ENCODE measurements at regions of chr17 and their contacts with region 1.

Region 1: GRCh38 chr17:19744922-19745757 is 3.0 kb downstream of the ALDH3A1 start:
- DNase-seq: peak; percentile 99
- ATAC-seq: peak; percentile 92
- H3K4me3 Mint-ChIP-seq: peak overlapping the region; percentile 54
- H3K27ac Mint-ChIP-seq: no peak overlapping the region
- H3K4me1 Mint-ChIP-seq: peaks cover 22% of the 10 kb centered on the region
- H3K27me3 Mint-ChIP-seq: peaks cover 13% of the 10 kb centered on the region; the same call in 1 of the 2 replicates
- CTCF ChIP-seq: peak; percentile 97

Region 2: GRCh38 chr17:19460700-19461099 is 284.4 kb before region 1 on chr17:
- CTCF ChIA-PET with region 1: interaction called, 10 read pairs
- POLR2A ChIA-PET with region 1: interaction called, 3 read pairs
- DNase-seq: no peak
- ATAC-seq: peak; percentile 9
- H3K4me3 Mint-ChIP-seq: peak overlapping the region; percentile 21
- H3K27ac Mint-ChIP-seq: peak overlapping the region; percentile 83
- H3K4me1 Mint-ChIP-seq: peaks cover 90% of the 10 kb centered on the region
- H3K27me3 Mint-ChIP-seq: no peaks in the 10 kb centered on the region
- CTCF ChIP-seq: no peak

Region 3: GRCh38 chr17:19579867-19580565 is 165.1 kb before region 1 on chr17:
- CTCF ChIA-PET with region 1: interaction called, 11 read pairs
- POLR2A ChIA-PET with region 1: no interaction called
- DNase-seq: peak; percentile 30
- ATAC-seq: peak; percentile 60
- H3K4me3 Mint-ChIP-seq: peak overlapping the region; percentile 78
- H3K27ac Mint-ChIP-seq: no peak overlapping the region
- H3K4me1 Mint-ChIP-seq: peaks cover 22% of the 10 kb centered on the region
- H3K27me3 Mint-ChIP-seq: peaks cover 34% of the 10 kb centered on the region
- CTCF ChIP-seq: no peak

Region 4: GRCh38 chr17:19718604-19719354 is 26.4 kb before region 1 on chr17:
- CTCF ChIA-PET with region 1: interaction called, 10 read pairs
- POLR2A ChIA-PET with region 1: interaction called, 3 read pairs
- DNase-seq: peak; percentile 75
- ATAC-seq: peak; percentile 82
- H3K4me3 Mint-ChIP-seq: no peak overlapping the region
- H3K27ac Mint-ChIP-seq: no peak overlapping the region
- H3K4me1 Mint-ChIP-seq: peaks cover 6% of the 10 kb centered on the region; the same call in 1 of the 2 replicates
- H3K27me3 Mint-ChIP-seq: no peaks in the 10 kb centered on the region; the same call in 1 of the 2 replicates
- CTCF ChIP-seq: peak; percentile 18; the same call in 1 of the 2 replicates

Region 5: GRCh38 chr17:19787733-19788357 is 42.7 kb after region 1 on chr17:
- CTCF ChIA-PET with region 1: no interaction called
- POLR2A ChIA-PET with region 1: no interaction called
- DNase-seq: no peak
- ATAC-seq: no peak
- H3K4me3 Mint-ChIP-seq: no peak overlapping the region
- H3K27ac Mint-ChIP-seq: no peak overlapping the region
- H3K4me1 Mint-ChIP-seq: no peaks in the 10 kb centered on the region
- H3K27me3 Mint-ChIP-seq: no peaks in the 10 kb centered on the region
- CTCF ChIP-seq: no peak

Region 6: GRCh38 chr17:19928299-19928698 is 183.2 kb after region 1 on chr17:
- CTCF ChIA-PET with region 1: no interaction called
- POLR2A ChIA-PET with region 1: no interaction called
- DNase-seq: no peak
- ATAC-seq: no peak
- H3K4me3 Mint-ChIP-seq: no peak overlapping the region
- H3K27ac Mint-ChIP-seq: no peak overlapping the region
- H3K4me1 Mint-ChIP-seq: no peaks in the 10 kb centered on the region
- H3K27me3 Mint-ChIP-seq: no peaks in the 10 kb centered on the region
- CTCF ChIP-seq: no peak